ENCODE measurements at regions of chr14 and their contacts with region 1.

Region 1: DNA sequence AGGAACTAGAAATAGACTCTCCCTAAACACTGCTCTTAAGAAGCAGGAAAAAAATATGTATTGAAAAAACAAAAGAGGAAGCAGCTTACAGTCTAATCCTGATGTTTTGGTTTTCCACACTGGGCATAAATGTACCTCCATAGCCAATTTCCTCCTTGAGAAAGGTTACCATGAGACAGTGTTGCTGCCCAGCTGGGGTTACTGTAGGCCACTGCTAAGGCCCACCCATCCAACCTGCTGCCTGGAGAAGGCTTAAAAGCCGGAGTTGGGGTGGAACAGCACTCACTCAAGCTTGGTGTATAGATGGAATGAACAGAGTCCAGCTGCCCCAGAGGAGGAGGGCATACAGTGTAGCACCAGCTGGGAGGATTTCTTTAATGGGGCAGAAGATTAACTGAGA is 41.1 kb downstream of the ERG28 start:
- DNase-seq: no peak
- H3K4me3 Mint-ChIP-seq: no peak overlapping the region
- H3K27ac Mint-ChIP-seq: no peak overlapping the region
- H3K4me1 Mint-ChIP-seq: no peaks in the 10 kb centered on the region
- H3K27me3 Mint-ChIP-seq: no peaks in the 10 kb centered on the region

Region 2: GRCh38 chr14:75577729-75578101 is 41.8 kb before region 1 on chr14:
- CTCF ChIA-PET with region 1: interaction called, 15 read pairs
- intact Hi-C with region 1: no loop called
- DNase-seq: peak; percentile 88
- H3K4me3 Mint-ChIP-seq: peak overlapping the region; percentile 82
- H3K27ac Mint-ChIP-seq: peak overlapping the region; percentile 78
- H3K4me1 Mint-ChIP-seq: peaks cover 22% of the 10 kb centered on the region
- H3K27me3 Mint-ChIP-seq: no peaks in the 10 kb centered on the region

Region 3: GRCh38 chr14:75604856-75605851 is 14.4 kb before region 1 on chr14:
- CTCF ChIA-PET with region 1: no interaction called
- intact Hi-C with region 1: no loop called
- DNase-seq: no peak
- H3K4me3 Mint-ChIP-seq: no peak overlapping the region
- H3K27ac Mint-ChIP-seq: no peak overlapping the region
- H3K4me1 Mint-ChIP-seq: no peaks in the 10 kb centered on the region
- H3K27me3 Mint-ChIP-seq: no peaks in the 10 kb centered on the region